ENCODE measurements at regions of chr2 and their contacts with region 1.

Region 1: GRCh38 chr2:109230941-109231420 is 102.0 kb downstream of the SH3RF3 start:
- DNase-seq: peak; percentile 62 to 82
- ATAC-seq: peak; percentile 76 to 96 (median 95)
- H3K4me3 ChIP-seq: peak overlapping the region; percentile 7
- H3K27ac ChIP-seq: peak overlapping the region; percentile 66
- H3K4me1 ChIP-seq: peaks cover 37% of the 10 kb centered on the region
- H3K27me3 ChIP-seq: no peaks in the 10 kb centered on the region
- CTCF ChIP-seq: no peak

Region 2: GRCh38 chr2:109173311-109174171 is 57.4 kb before region 1 on chr2:
- intact Hi-C with region 1: loop called in 1 of 2 experiments (anchors 5 kb)
- DNase-seq: peak; percentile 90
- ATAC-seq: peak; percentile 80 to 91 (median 85)
- H3K4me3 ChIP-seq: peak overlapping the region; percentile 36
- H3K27ac ChIP-seq: peak overlapping the region; percentile 80
- H3K4me1 ChIP-seq: peaks cover 80% of the 10 kb centered on the region
- H3K27me3 ChIP-seq: no peaks in the 10 kb centered on the region
- CTCF ChIP-seq: no peak

Region 3: GRCh38 chr2:109529532-109530449 is 298.8 kb after region 1 on chr2:
- intact Hi-C with region 1: no loop called
- DNase-seq: no peak
- ATAC-seq: peak in 1 of 4 donors; percentile 23
- H3K4me3 ChIP-seq: no peak overlapping the region
- H3K27ac ChIP-seq: no peak overlapping the region
- H3K4me1 ChIP-seq: no peaks in the 10 kb centered on the region
- H3K27me3 ChIP-seq: no peaks in the 10 kb centered on the region
- CTCF ChIP-seq: no peak